HEK293T (cell line): ENCODE measurements at regions of chr10 and their contacts with region 1.

Region 1: GRCh38 chr10:27111277-27111676 is 11.0 kb upstream of the ANKRD26 start:
- DNase-seq: no peak

Region 2: GRCh38 chr10:26977635-26978034 is 133.6 kb before region 1 on chr10:
- CTCF ChIA-PET with region 1: no interaction called
- POLR2A ChIA-PET with region 1: no interaction called
- DNase-seq: no peak

Region 3: DNA sequence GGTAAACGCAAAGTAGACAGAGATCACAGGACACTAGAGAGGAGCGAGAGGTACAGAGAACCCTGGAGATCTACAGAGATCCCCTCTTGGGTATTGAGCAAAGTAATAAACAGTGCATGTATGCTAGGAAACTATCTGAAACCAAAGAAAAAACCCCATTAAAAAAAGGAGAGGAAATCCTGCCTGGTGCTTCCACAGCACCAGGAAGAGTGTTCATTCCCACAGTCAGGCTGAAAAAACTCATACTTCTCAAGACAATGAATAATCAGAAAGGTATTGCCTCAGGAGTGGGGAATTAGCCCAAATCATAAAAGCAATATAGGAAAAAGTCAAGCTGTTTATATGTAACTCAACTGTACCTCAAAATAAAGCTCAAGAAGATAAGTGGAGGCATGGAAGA is 70.1 kb before region 1 on chr10:
- CTCF ChIA-PET with region 1: no interaction called
- POLR2A ChIA-PET with region 1: no interaction called
- DNase-seq: no peak

Region 4: GRCh38 chr10:27099916-27100812 is 11.1 kb before region 1 on chr10 and contains the start of gene ANKRD26:
- CTCF ChIA-PET with region 1: no interaction called
- POLR2A ChIA-PET with region 1: interaction called, 15 read pairs
- DNase-seq: peak; percentile 92